Stomach (tissue), 19 donors: ENCODE measurements at regions of chr2 and their contacts with region 1.

Region 1: GRCh38 chr2:201860636-201861066 is 54.3 kb downstream of the CDK15 start:
- DNase-seq: peak; percentile 40 to 91
- H3K4me3 ChIP-seq: no peak overlapping the region
- H3K27ac ChIP-seq: no peak overlapping the region
- H3K4me1 ChIP-seq: peaks cover 0 to 32% (median 8%) of the 10 kb centered on the region in 4 donors
- H3K27me3 ChIP-seq: peaks cover 0 to 53% (median 6%) of the 10 kb centered on the region in 3 donors
- CTCF ChIP-seq: peak in 5 of 7 experiments; percentile 59 to 84 (median 78)
- EP300 ChIP-seq: no peak
- POLR2A ChIP-seq: no peak

Region 2: GRCh38 chr2:201696151-201696659 is 164.4 kb before region 1 on chr2:
- intact Hi-C with region 1: no loop called
- DNase-seq: no peak
- H3K4me3 ChIP-seq: no peak overlapping the region
- H3K27ac ChIP-seq: no peak overlapping the region
- H3K4me1 ChIP-seq: peaks cover 0 to 5% (median 0%) of the 10 kb centered on the region in 4 donors
- H3K27me3 ChIP-seq: no peaks in the 10 kb centered on the region
- CTCF ChIP-seq: no peak
- EP300 ChIP-seq: no peak
- POLR2A ChIP-seq: no peak

Region 3: GRCh38 chr2:202184557-202184956 is 323.9 kb after region 1 on chr2:
- intact Hi-C with region 1: loop called (anchors 5 kb)
- DNase-seq: no peak
- H3K4me3 ChIP-seq: no peak overlapping the region
- H3K27ac ChIP-seq: no peak overlapping the region
- H3K4me1 ChIP-seq: no peaks in the 10 kb centered on the region
- H3K27me3 ChIP-seq: no peaks in the 10 kb centered on the region
- CTCF ChIP-seq: no peak
- EP300 ChIP-seq: no peak
- POLR2A ChIP-seq: no peak